ENCODE measurements at regions of chr19 and their contacts with region 1.

Region 1: GRCh38 chr19:53808710-53809125 is 15.4 kb downstream of the NLRP12 start:
- DNase-seq: peak; percentile 76
- ATAC-seq: peak; percentile 91
- H3K4me3 ChIP-seq: no peak overlapping the region
- H3K27ac ChIP-seq: no peak overlapping the region
- H3K4me1 ChIP-seq: no peaks in the 10 kb centered on the region
- H3K27me3 ChIP-seq: no peaks in the 10 kb centered on the region
- CTCF ChIP-seq: peak; percentile 87

Region 2: DNA sequence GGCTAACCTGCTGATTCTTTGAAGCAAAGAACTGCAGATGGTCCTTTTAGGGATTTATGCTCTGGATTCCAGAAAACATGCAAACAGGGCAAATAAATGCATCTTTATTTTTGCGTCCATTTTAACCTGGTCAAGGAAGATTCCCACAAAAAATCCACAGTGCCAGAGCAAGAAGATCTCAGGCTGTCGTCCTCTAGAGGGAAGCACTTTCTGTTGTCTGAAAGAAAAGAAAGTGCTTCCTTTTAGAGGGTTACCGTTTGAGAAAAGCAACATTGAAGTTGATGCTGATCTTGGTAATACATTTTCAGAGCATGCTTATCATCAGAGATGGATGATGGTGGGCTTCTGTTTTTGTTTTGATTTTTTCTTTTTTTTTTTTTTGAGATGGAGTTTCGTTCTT is 101.4 kb before region 1 on chr19:
- CTCF ChIA-PET with region 1: no interaction called
- POLR2A ChIA-PET with region 1: no interaction called
- intact Hi-C with region 1: no loop called
- DNase-seq: no peak
- ATAC-seq: no peak
- H3K4me3 ChIP-seq: no peak overlapping the region
- H3K27ac ChIP-seq: no peak overlapping the region
- H3K4me1 ChIP-seq: no peaks in the 10 kb centered on the region
- H3K27me3 ChIP-seq: no peaks in the 10 kb centered on the region; the same call in 1 of the 2 replicates
- CTCF ChIP-seq: no peak; the same call in 1 of the 2 replicates

Region 3: GRCh38 chr19:53785101-53785889 is 23.4 kb before region 1 on chr19:
- CTCF ChIA-PET with region 1: interaction called, 10 read pairs
- POLR2A ChIA-PET with region 1: no interaction called
- intact Hi-C with region 1: no loop called
- DNase-seq: no peak
- ATAC-seq: no peak
- H3K4me3 ChIP-seq: no peak overlapping the region
- H3K27ac ChIP-seq: no peak overlapping the region
- H3K4me1 ChIP-seq: no peaks in the 10 kb centered on the region
- H3K27me3 ChIP-seq: peaks cover 8% of the 10 kb centered on the region; the same call in 1 of the 2 replicates
- CTCF ChIP-seq: no peak

Region 4: DNA sequence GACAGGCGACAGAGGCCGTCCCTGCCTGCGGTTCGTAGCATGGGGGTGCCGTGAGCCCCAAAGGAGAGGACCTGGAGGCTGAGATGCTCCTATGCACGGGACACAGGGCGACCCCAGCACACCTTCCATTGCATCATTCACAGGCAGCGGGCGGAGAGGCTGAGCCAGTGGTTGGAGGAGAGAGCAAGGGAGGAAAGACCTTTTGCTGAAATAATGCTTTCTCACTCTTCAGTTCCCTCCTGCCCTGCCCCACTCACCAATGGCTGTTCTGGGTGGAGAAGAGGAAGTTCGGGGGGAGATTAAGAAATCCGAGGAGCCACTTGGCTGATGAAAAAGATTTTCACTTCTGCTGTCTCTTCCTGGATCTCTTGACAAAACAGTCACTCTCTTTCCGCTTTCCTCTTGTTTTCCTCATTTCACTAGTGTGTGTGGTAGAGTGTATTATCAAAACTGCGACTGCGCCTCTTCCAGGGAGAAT is 15.5 kb after region 1 on chr19 and contains the start of gene NLRP12:
- CTCF ChIA-PET with region 1: interaction called, 10 read pairs
- POLR2A ChIA-PET with region 1: no interaction called
- intact Hi-C with region 1: no loop called
- DNase-seq: no peak
- ATAC-seq: no peak
- H3K4me3 ChIP-seq: no peak within 1 kb of the TSS
- H3K27ac ChIP-seq: no peak within 1 kb of the TSS
- H3K4me1 ChIP-seq: no peaks in the 10 kb centered on the region
- H3K27me3 ChIP-seq: no peaks in the 10 kb centered on the region
- CTCF ChIP-seq: no peak
- total RNA-seq, gene NLRP12: 0.12 TPM in 1 of 2 replicates, not detected in the other

Region 5: DNA sequence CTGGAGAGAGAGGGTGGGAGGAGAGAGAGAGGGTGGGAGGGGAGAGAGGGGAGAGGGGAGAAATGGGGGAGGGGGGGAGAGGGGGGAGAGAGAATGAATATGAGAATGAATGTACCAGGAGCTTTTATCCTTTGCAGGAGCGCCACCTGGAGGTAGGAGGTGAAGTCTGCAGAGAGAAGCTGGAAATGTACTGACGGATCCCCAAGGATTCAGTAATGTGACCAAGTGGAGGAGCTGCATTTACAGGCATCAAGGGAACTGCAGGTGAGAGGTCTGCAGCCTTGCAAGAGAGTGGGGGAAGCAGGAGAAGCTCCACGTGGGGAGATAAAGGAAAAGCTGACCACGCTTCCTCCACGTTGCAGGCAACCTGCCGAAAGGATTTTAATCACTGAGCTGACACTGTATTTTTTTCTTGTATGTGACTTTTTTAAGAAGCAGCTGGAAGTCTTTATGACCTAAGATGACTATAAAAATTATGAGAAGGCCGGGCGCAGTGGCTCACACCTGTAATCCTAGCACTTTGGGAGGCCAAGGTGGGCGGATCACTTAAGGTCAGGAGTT is 221.3 kb after region 1 on chr19:
- CTCF ChIA-PET with region 1: interaction called, 17 read pairs
- POLR2A ChIA-PET with region 1: no interaction called
- intact Hi-C with region 1: loop called (anchors 1 kb)
- DNase-seq: peak; percentile 94
- ATAC-seq: peak; percentile 79
- H3K4me3 ChIP-seq: no peak overlapping the region
- H3K27ac ChIP-seq: no peak overlapping the region
- H3K4me1 ChIP-seq: peaks cover 21% of the 10 kb centered on the region
- H3K27me3 ChIP-seq: no peaks in the 10 kb centered on the region
- CTCF ChIP-seq: peak; percentile 80

Region 6: GRCh38 chr19:54231077-54231931 is 422.6 kb after region 1 on chr19:
- CTCF ChIA-PET with region 1: no interaction called
- POLR2A ChIA-PET with region 1: no interaction called
- intact Hi-C with region 1: loop called (anchors 10 kb)
- DNase-seq: peak; percentile 93
- ATAC-seq: peak; percentile 98
- H3K4me3 ChIP-seq: no peak overlapping the region
- H3K27ac ChIP-seq: no peak overlapping the region
- H3K4me1 ChIP-seq: peaks cover 8% of the 10 kb centered on the region
- H3K27me3 ChIP-seq: peaks cover 10% of the 10 kb centered on the region; the same call in 1 of the 2 replicates
- CTCF ChIP-seq: peak; percentile 99

Measured in PC-3 (cell line).